AG04450 (cell line): ENCODE measurements at regions of chr1 and their contacts with region 1.

Region 1: DNA sequence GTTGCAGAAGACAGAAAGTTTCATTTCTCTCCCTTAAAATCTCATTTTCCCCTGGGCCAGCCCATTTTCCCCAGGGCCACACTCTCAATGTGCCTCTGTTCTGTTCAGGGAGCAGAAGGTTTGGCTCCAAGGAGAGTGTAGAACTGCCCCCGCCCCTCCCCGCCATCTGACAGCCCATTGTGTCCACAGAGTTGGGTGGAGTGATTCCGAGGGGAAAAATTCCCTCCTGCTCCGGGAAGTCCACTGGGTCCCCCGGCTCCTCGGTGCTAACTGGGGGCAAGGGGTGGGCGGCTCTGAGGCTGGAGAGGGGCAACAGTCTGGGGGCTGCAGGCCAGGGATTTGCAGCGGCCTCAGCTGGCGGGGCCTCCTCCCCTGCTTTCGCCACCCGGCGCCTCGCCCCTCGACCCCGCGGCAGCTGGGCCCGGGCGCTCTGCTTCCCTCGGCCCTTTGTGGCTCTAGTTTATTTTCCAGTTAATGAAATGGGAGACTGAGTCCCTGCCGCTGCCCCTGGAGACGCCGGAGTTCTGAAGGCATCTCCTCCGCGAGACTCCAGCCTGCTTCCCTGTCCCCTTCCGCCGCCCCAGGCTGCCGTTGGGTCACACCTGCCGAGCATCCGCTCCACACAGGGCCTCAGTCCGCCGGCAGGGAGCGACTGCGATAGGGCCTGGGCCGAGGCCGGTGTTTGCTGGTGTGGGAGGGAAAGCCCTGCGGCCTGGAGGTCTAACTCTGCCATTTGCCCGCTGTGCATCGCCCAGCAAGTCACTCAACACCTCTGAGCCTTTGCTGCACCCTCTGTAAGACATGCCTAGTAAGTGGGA is 14.7 kb upstream of the KIRREL1 start:
- DNase-seq: no peak
- H3K4me3 ChIP-seq: no peak overlapping the region
- H3K27ac ChIP-seq: no peak overlapping the region
- H3K27me3 ChIP-seq: peaks cover 27% of the 10 kb centered on the region
- CTCF ChIP-seq: no peak

Region 2: GRCh38 chr1:157963713-157964112 is 15.1 kb before region 1 on chr1:
- CTCF ChIA-PET with region 1: interaction called, 40 read pairs
- POLR2A ChIA-PET with region 1: no interaction called
- DNase-seq: peak; percentile 51
- H3K4me3 ChIP-seq: no peak overlapping the region
- H3K27ac ChIP-seq: no peak overlapping the region
- H3K27me3 ChIP-seq: peaks cover 16% of the 10 kb centered on the region
- CTCF ChIP-seq: peak; percentile 92

Region 3: GRCh38 chr1:158045639-158046038 is 66.8 kb after region 1 on chr1:
- CTCF ChIA-PET with region 1: no interaction called
- POLR2A ChIA-PET with region 1: interaction called, 12 read pairs
- DNase-seq: peak; percentile 42
- H3K4me3 ChIP-seq: no peak overlapping the region
- H3K27ac ChIP-seq: no peak overlapping the region
- H3K27me3 ChIP-seq: no peaks in the 10 kb centered on the region
- CTCF ChIP-seq: no peak

Region 4: DNA sequence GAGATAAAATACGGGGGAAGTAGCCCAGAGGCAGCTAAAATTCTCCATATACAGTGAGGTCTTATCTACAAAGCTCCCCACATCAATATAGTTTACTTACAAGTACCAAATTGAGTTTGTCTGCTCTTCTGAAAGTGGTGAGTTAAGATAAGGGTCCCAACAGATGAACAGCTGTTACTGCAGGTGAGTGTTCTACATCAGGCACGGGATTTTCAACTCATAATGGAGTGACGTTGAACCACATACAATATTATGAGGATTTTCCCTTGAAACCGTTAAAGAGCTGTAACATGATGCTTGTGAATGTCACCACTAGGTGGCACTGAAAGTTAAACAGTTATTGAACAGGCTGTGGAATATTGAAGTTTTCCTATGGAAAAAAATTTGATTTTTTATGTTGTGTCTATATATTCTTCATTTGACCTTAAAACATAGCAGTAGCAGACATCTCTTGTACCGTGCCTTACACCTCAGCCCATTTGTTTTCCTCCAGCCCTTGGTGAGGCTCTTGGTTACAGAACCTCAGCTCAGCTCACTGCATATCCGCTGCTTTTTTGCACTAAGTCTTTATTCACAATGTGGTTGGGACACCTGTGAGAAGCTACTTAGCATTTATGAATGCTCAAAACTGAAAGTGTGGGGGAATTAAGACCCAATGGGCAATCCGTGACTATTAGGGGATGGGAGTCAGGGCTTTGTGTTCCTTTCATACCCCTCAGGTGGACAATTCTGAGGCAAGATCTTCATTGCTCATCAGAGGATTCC is 225.1 kb after region 1 on chr1:
- CTCF ChIA-PET with region 1: no interaction called
- POLR2A ChIA-PET with region 1: no interaction called
- DNase-seq: peak; percentile 23
- H3K4me3 ChIP-seq: no peak overlapping the region
- H3K27ac ChIP-seq: no peak overlapping the region
- H3K27me3 ChIP-seq: no peaks in the 10 kb centered on the region
- CTCF ChIP-seq: peak; percentile 73